ENCODE measurements at regions of chr17 and their contacts with region 1.

Region 1: DNA sequence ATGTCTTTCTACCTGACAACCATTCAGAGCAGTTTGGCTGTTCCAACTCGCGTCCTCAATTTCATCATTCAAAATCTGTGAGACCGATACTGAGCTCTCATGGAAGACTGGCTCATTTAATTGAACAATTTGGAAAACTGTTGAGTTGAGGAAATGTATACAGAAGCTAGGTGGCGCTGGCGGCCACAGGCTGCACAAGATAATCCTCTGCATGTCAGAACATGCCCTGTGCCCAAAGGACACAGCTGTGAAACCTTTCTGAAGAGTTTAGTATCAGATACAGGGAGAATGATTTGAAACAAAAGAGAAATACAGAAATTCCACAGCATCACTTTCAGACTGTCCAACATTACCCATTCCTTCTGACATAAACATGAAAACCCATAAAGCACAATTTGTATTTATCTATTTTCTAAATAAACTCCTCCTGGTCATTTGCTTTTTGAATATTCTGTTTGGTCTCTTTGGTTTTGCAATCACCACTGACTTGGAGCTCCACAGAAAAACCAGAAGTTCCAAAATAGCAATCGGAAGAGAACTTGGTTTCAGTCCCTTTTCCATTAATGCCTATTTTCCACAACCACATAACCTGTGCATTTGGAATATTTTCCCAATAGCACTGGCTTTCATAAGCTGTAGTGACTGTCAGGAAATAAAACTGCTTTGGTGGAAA is 192.8 kb downstream of the MAP2K6 start:
- DNase-seq: peak; percentile 85
- ATAC-seq: peak; percentile 59
- H3K4me3 ChIP-seq: no peak overlapping the region
- H3K27ac ChIP-seq: peak overlapping the region; percentile 97
- H3K4me1 ChIP-seq: peaks cover 18% of the 10 kb centered on the region
- H3K27me3 ChIP-seq: no peaks in the 10 kb centered on the region
- CTCF ChIP-seq: peak; percentile 93
- POLR2A ChIP-seq: 0 out of 2 replicates have a peak, but pooled peaks have one; percentile 2
- RAD21 ChIP-seq: peak; percentile 93

Region 2: DNA sequence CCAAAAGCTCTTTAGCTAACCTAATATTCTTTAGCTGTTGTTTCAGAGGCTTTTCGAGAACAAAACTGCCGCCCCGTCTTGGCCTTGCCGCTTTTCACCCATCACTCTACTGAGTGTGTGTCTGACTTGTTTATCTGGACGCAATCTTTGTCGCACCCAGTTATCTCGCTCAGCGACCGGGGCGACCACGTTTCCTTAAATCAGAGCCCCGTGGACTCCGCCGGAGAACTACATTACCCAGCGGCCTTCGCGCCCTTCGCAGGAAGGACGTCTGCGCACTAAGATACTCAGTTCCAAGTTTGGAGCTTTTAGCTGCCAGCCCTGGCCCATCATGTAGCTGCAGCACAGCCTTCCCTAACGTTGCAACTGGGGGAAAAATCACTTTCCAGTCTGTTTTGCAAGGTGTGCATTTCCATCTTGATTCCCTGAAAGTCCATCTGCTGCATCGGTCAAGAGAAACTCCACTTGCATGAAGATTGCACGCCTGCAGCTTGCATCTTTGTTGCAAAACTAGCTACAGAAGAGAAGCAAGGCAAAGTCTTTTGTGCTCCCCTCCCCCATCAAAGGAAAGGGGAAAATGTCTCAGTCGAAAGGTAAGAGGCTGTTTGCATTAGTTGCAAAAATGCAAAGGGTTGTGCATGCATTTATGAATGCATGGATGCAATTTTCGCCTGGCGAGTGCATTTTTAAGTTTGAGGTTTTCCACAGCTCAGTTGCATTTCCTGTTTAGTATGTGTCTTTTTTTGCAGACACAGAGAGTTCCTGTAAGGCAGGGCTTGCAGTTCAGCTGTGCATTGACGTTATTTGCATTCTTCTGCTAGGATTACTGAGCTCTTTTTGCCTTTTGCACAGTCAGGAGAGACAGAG is 192.7 kb before region 1 on chr17 and contains the start of gene MAP2K6:
- CTCF ChIA-PET with region 1: no interaction called
- POLR2A ChIA-PET with region 1: no interaction called
- dilution Hi-C with region 1: no loop called
- in situ Hi-C with region 1: no loop called
- intact Hi-C with region 1: no loop called
- DNase-seq: peak; percentile 65
- ATAC-seq: peak; percentile 90
- H3K4me3 ChIP-seq: peak within 1 kb of the TSS; percentile 51
- H3K27ac ChIP-seq: peak within 1 kb of the TSS; percentile 36
- H3K4me1 ChIP-seq: 0 out of 2 replicates have a peak, but pooled peaks cover 2% of the 10 kb centered on the region
- H3K27me3 ChIP-seq: no peaks in the 10 kb centered on the region
- CTCF ChIP-seq: no peak
- POLR2A ChIP-seq: no peak
- RAD21 ChIP-seq: no peak
- total RNA-seq, gene MAP2K6: 3.6 and 5.7 TPM in 2 replicates

Region 3: GRCh38 chr17:69711541-69711940 is 104.2 kb after region 1 on chr17:
- CTCF ChIA-PET with region 1: interaction called, 4 read pairs
- POLR2A ChIA-PET with region 1: no interaction called
- dilution Hi-C with region 1: no loop called
- in situ Hi-C with region 1: no loop called
- intact Hi-C with region 1: loop called (anchors 5 kb)
- DNase-seq: no peak
- ATAC-seq: no peak
- H3K4me3 ChIP-seq: no peak overlapping the region
- H3K27ac ChIP-seq: no peak overlapping the region
- H3K4me1 ChIP-seq: peaks cover 6% of the 10 kb centered on the region
- H3K27me3 ChIP-seq: no peaks in the 10 kb centered on the region
- CTCF ChIP-seq: no peak
- POLR2A ChIP-seq: no peak
- RAD21 ChIP-seq: no peak

Region 4: GRCh38 chr17:69779378-69780214 is 172.3 kb after region 1 on chr17:
- CTCF ChIA-PET with region 1: interaction called, 4 read pairs
- POLR2A ChIA-PET with region 1: no interaction called
- dilution Hi-C with region 1: no loop called
- in situ Hi-C with region 1: no loop called
- intact Hi-C with region 1: loop called (anchors 5 kb)
- DNase-seq: peak; percentile 90
- ATAC-seq: peak; percentile 76
- H3K4me3 ChIP-seq: no peak overlapping the region
- H3K27ac ChIP-seq: peak overlapping the region; percentile 87
- H3K4me1 ChIP-seq: peaks cover 2% of the 10 kb centered on the region; the same call in 1 of the 2 replicates
- H3K27me3 ChIP-seq: no peaks in the 10 kb centered on the region
- CTCF ChIP-seq: no peak
- POLR2A ChIP-seq: no peak
- RAD21 ChIP-seq: no peak

Region 5: DNA sequence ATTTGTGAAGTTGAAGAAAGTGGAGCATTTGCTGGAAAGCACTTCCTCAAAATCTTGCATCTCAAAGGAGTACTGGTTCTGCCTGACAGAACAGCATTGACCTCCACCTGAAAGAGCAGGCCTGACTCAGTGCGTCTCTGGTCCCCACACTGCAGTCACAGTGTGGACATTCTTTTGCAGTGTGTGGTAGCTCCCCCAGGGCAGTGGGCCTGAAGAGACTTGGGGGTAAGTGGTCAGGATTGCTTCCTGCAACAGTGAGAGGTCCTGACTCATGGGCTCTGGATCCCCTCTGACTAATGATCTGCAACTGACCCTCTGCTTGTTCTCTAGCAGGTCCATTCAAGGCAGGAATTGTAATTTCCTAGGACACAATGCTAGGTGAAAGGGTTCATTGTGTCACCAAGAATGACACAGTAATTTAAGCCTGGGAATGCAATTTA is 262.8 kb after region 1 on chr17:
- CTCF ChIA-PET with region 1: interaction called, 9 read pairs
- POLR2A ChIA-PET with region 1: interaction called, 13 read pairs
- dilution Hi-C with region 1: no loop called
- in situ Hi-C with region 1: no loop called
- intact Hi-C with region 1: loop called (anchors 2 kb)
- DNase-seq: peak; percentile 91
- ATAC-seq: peak; percentile 59
- H3K4me3 ChIP-seq: no peak overlapping the region
- H3K27ac ChIP-seq: peak overlapping the region; percentile 78
- H3K4me1 ChIP-seq: peaks cover 21% of the 10 kb centered on the region
- H3K27me3 ChIP-seq: no peaks in the 10 kb centered on the region
- CTCF ChIP-seq: no peak
- POLR2A ChIP-seq: no peak
- RAD21 ChIP-seq: no peak

Region 6: DNA sequence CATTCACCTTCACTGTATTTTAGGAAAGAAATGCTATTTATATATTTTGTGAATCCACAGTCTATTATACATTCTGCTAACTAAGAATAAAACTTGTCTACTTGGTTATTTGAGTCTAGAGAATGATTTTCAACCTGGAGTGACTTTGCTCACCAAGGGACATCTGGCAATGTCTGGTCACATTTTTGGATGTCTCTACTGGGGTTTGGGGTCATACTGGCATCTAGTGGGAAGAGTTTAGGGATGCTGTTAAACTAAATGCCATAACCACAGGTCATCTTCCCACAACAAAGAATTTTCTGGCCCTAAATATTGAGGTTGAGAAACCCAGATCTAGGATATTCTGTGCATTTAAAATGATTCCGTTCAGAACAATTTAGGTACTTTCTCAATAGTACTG is 493.7 kb after region 1 on chr17:
- CTCF ChIA-PET with region 1: no interaction called
- POLR2A ChIA-PET with region 1: no interaction called
- dilution Hi-C with region 1: no loop called
- in situ Hi-C with region 1: no loop called
- intact Hi-C with region 1: loop called (anchors 2 kb)
- DNase-seq: no peak
- ATAC-seq: no peak
- H3K4me3 ChIP-seq: no peak overlapping the region
- H3K27ac ChIP-seq: no peak overlapping the region
- H3K4me1 ChIP-seq: no peaks in the 10 kb centered on the region; the same call in 1 of the 2 replicates
- H3K27me3 ChIP-seq: no peaks in the 10 kb centered on the region
- CTCF ChIP-seq: 0 out of 2 replicates have a peak, but pooled peaks have one; percentile 17
- POLR2A ChIP-seq: no peak
- RAD21 ChIP-seq: peak; percentile 21; the same call in 1 of the 2 replicates

Region 7: GRCh38 chr17:70168977-70169708 is 561.8 kb after region 1 on chr17 and contains the start of gene KCNJ2:
- CTCF ChIA-PET with region 1: interaction called, 7 read pairs
- POLR2A ChIA-PET with region 1: interaction called, 4 read pairs
- dilution Hi-C with region 1: no loop called
- in situ Hi-C with region 1: no loop called
- intact Hi-C with region 1: loop called (anchors 2 kb)
- DNase-seq: peak; percentile 79
- ATAC-seq: peak; percentile 94
- H3K4me3 ChIP-seq: peak within 1 kb of the TSS; percentile 73
- H3K27ac ChIP-seq: peak within 1 kb of the TSS; percentile 75
- H3K4me1 ChIP-seq: no peaks in the 10 kb centered on the region
- H3K27me3 ChIP-seq: no peaks in the 10 kb centered on the region
- CTCF ChIP-seq: no peak
- POLR2A ChIP-seq: peak; percentile 66; the same call in 1 of the 2 replicates
- RAD21 ChIP-seq: no peak
- total RNA-seq, gene KCNJ2: 5.8 and 8.6 TPM in 2 replicates

Region 8: DNA sequence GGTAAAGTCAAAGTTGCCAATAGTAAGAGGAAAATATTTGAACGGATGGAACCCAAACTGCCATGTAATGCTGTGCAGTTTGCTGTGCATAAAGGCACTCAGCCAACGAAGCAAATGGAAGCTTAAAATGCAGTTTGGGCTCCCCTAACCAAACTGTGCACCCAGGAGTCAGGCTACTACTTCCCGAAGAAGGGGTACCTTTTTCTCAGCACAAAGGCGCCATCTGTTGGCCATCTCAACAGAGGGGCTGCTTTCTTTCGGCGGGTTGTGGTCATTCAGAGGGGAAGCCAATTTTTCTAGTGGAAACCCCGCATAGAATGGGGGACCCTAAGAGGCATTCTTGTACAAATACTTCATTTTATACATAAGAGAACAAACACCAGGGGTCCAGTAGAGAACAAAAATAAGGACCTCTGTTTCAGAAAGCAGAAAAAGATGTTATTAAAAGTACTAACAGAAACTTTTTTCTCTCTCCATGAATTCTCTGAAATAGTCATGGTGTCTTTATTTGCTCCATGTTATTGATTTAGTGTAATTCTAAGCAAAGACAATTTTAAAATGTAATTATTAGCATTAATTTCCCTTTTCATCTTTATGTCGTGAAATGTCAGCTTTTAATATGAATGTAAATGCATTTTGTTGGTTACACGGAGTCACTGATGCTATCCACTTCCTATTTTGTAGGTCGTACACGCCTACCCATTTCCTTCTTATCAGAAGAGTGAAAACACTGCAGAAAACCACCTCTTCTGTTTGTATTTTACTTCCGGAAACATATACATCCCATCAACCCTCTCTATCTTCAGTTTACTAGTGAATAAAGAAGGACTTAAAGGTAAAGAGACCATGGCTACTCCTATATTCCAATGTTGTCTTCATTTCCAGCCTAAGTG is 1015.3 kb after region 1 on chr17:
- CTCF ChIA-PET with region 1: no interaction called
- POLR2A ChIA-PET with region 1: no interaction called
- dilution Hi-C with region 1: no loop called
- in situ Hi-C with region 1: no loop called
- intact Hi-C with region 1: loop called (anchors 5 kb)
- DNase-seq: peak; percentile 18
- ATAC-seq: peak; percentile 63
- H3K4me3 ChIP-seq: no peak overlapping the region
- H3K27ac ChIP-seq: no peak overlapping the region
- H3K4me1 ChIP-seq: no peaks in the 10 kb centered on the region
- H3K27me3 ChIP-seq: no peaks in the 10 kb centered on the region; the same call in none of the 2 replicates
- CTCF ChIP-seq: peak; percentile 36
- POLR2A ChIP-seq: no peak
- RAD21 ChIP-seq: peak; percentile 42; the same call in 1 of the 2 replicates